ENCODE measurements at regions of chr2 and their contacts with region 1.

Region 1: GRCh38 chr2:71068218-71069035 is at the start of gene NAGK:
- DNase-seq: peak; percentile 98
- ATAC-seq: peak; percentile 68
- H3K4me3 Mint-ChIP-seq: peak within 1 kb of the TSS; percentile 97
- H3K27ac Mint-ChIP-seq: peak within 1 kb of the TSS; percentile 99
- H3K4me1 Mint-ChIP-seq: peaks cover 91% of the 10 kb centered on the region
- H3K27me3 Mint-ChIP-seq: no peaks in the 10 kb centered on the region
- CTCF ChIP-seq: no peak
- total RNA-seq, gene NAGK: 175 and 208 TPM in 2 replicates

Region 2: DNA sequence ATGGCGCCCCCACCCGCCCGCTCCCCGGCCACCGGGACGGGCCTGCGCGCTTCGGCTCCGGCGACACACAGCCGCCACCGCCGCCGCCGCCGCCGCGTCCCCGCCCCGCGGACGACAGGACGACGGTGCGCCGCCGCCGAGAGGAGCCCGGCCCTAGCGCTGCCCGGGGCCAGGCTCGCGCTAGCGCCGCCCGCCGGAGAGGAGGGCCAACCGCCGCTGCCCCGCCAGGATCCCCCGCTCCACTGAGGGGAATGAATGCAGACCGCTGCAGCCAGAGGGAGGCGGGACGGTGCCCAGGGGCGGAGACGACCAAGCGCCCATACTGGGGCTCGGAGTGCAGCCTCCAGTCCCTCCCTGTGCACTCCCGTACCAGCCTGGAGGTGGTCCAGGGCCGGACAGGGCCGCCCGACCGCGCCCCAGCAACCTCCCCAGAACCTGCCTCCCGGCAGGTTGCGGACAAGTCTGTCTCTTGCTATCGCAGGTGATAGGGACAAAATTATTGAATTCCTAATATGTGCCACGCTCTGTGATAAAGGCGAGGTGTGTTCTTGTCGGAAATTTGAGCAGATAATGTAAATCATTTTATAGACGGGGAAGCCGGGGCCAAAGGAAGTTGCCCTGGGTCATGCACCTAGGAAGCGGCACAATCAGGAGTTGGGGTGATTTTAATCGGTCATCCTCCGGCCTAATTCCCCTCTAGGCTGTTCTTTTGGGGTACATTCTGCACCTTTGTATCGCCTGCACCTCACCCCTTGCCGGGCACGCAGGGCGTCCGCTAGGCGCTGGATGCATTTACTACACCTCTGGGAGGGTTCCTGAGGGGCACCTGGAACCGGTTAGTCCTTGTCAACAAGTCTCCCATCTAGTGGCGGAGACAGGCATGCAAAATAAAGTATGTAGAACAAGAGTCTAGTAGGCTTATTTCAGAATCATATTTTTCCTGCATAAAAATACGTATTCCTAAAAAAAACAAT is 73.4 kb before region 1 on chr2 and contains the start of gene TEX261:
- CTCF ChIA-PET with region 1: interaction called, 3 read pairs
- POLR2A ChIA-PET with region 1: interaction called, 4 read pairs
- intact Hi-C with region 1: loop called (anchors 1 kb)
- DNase-seq: peak; percentile 96
- ATAC-seq: peak; percentile 96
- H3K4me3 Mint-ChIP-seq: peak within 1 kb of the TSS; percentile 96
- H3K27ac Mint-ChIP-seq: peak within 1 kb of the TSS; percentile 87
- H3K4me1 Mint-ChIP-seq: peaks cover 33% of the 10 kb centered on the region
- H3K27me3 Mint-ChIP-seq: no peaks in the 10 kb centered on the region
- CTCF ChIP-seq: no peak
- total RNA-seq, gene TEX261: 46.8 and 54.1 TPM in 2 replicates

Region 3: DNA sequence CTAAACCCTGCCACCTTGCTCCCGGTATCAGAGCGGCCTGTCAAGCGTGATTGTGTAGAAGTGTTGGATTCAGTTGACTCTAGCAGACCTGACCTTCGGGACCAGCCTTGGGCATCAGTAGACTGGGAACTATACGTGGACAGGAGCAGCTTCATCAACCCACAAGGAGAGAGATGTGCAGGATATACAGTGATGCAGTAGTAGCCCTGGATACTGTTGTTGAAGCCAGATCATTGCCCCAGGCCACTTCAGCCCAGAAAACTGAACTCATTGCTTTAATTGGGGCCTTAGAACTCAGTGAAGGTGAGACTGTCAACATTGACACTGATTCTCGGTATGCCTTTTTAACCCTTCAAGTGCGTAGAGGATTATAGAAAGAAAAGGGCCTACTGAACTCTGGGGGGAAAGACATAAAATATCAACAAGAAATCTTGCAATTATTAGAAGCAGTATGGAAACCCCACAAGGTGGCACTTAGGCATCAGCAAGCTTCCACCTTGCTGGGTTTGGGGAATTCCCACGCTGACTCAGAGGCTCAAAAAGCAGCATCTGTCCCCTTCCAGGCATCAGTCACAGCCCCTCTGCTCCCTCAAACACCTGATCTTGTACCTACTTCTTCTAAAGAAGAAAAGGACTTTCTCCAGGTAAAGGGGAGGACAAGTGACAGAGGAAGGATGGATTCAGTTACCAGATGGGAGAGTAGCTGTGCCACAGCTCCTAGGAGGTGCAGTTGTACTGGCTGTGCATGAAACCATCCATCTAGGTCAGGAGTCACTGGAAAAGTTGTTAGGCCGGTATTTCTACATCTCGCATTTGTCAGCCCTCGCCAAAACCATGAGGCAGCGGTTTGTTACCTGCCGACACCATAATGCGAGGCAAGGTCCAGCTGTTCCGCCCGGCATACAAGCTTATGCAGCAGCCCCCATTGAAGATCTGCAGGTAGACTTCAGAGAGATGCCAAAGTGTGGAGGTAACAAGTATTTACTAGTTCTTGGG is 18.8 kb before region 1 on chr2:
- CTCF ChIA-PET with region 1: interaction called, 15 read pairs
- POLR2A ChIA-PET with region 1: interaction called, 17 read pairs
- intact Hi-C with region 1: loop called (anchors 1 kb)
- DNase-seq: no peak
- ATAC-seq: peak; percentile 82
- H3K4me3 Mint-ChIP-seq: no peak overlapping the region
- H3K27ac Mint-ChIP-seq: no peak overlapping the region
- H3K4me1 Mint-ChIP-seq: peaks cover 7% of the 10 kb centered on the region
- H3K27me3 Mint-ChIP-seq: no peaks in the 10 kb centered on the region
- CTCF ChIP-seq: no peak

Region 4: GRCh38 chr2:71130113-71130904 is 61.9 kb after region 1 on chr2 and contains the starts of genes MCEE and MPHOSPH10:
- CTCF ChIA-PET with region 1: interaction called, 26 read pairs
- POLR2A ChIA-PET with region 1: interaction called, 170 read pairs
- intact Hi-C with region 1: loop called (anchors 1 kb)
- DNase-seq: peak; percentile 79
- ATAC-seq: peak; percentile 94
- H3K4me3 Mint-ChIP-seq: no peak within 1 kb of the TSS
- H3K27ac Mint-ChIP-seq: no peak within 1 kb of the TSS
- H3K4me1 Mint-ChIP-seq: peaks cover 17% of the 10 kb centered on the region
- H3K27me3 Mint-ChIP-seq: no peaks in the 10 kb centered on the region
- CTCF ChIP-seq: no peak
- total RNA-seq, gene MCEE: 11.1 and 12.2 TPM in 2 replicates
- total RNA-seq, gene MPHOSPH10: 47.6 and 47.8 TPM in 2 replicates